ENCODE measurements at regions of chrX and their contacts with region 1.

Region 1: DNA sequence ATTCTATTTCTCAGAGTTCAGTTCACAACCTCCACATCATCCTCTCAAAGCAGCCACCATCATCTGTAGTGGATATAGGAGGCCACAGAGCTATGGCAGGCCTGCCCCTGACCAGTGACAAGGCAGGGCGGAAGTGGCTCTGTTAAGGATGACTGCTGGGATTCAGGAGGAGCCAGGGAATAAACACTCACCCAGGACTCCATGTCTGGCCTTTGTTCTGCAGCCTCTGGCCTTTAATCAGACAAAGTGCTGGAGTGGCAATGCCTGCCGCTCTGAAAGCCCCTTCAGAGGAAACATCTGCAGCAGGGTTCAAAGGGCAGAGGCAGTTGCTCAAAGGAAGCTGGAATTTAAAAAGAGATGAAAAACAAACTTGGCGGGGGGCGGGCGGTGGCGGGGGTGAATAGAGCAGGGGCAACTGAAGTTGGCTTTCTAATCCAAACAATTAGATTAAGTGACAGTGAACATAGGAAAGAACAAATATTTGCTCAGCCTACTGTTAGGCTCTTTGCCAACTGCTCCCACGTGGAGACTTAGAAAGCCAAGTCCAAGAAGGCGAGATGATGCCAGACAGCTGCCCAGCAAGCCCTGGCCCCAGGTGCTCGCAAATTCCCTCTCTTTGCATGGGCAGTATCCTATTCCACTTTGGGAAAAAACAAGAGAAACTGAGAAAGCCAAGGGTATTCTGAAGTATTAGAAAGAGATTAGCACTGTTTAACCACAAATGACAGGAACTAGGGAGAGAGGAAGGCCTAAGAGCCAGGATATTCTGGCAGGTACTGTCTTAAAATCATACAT is 5.5 kb downstream of the MPP1 start:
- DNase-seq: no peak
- H3K4me3 Mint-ChIP-seq: no peak overlapping the region
- H3K27ac Mint-ChIP-seq: peak overlapping the region; percentile 84
- H3K4me1 Mint-ChIP-seq: peaks cover 43% of the 10 kb centered on the region
- H3K27me3 Mint-ChIP-seq: no peaks in the 10 kb centered on the region

Region 2: GRCh38 chrX:154827194-154828015 is 27.7 kb after region 1 on chrX:
- CTCF ChIA-PET with region 1: no interaction called
- POLR2A ChIA-PET with region 1: no interaction called
- intact Hi-C with region 1: loop called (anchors 1 kb)
- DNase-seq: peak; percentile 13
- H3K4me3 Mint-ChIP-seq: no peak overlapping the region
- H3K27ac Mint-ChIP-seq: peak overlapping the region; percentile 69
- H3K4me1 Mint-ChIP-seq: peaks cover 20% of the 10 kb centered on the region
- H3K27me3 Mint-ChIP-seq: no peaks in the 10 kb centered on the region